ENCODE measurements at regions of chr22 and their contacts with region 1.

Region 1: DNA sequence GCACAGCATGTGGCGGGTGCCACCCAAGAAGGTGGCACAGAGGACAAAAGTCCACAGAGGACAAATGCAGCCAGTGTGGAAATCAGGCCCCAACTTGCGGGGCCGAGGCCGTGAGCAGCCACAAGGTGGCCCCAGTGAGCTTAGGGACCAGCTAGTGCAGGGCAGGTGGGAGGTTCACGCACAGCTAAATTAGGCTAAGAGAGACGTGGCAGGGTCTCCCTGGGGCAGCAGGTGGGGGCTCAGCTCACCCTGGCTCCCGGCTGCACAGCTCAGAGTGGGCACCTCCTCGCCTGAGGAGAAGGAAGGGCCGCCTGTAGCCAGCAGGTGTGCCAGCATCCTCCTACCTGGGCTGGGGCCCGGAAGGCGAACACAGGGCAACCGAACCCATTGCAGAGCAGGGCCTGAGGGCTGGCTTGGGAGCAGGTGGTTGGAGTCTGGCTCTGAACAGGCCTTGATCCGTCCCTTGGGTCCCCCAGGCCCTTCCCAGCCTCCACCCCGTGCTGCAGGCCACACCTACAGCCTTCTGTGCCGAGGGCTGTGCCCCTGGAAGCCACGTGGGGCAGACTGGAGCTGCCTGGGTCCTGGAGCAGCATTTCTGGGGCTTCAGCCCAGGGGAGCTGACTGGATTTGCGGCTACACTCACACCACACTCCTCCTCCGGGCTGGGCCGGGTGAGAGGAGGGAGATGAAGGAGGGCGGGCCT is 26.1 kb upstream of the CELSR1 start:
- DNase-seq: peak; percentile 37
- ATAC-seq: peak; percentile 88
- H3K4me3 ChIP-seq: no peak overlapping the region
- H3K27ac ChIP-seq: no peak overlapping the region
- H3K4me1 ChIP-seq: peaks cover 5% of the 10 kb centered on the region; the same call in 1 of the 2 replicates
- H3K27me3 ChIP-seq: peaks cover 1% of the 10 kb centered on the region; the same call in 1 of the 2 replicates
- CTCF ChIP-seq: peak; percentile 70
- POLR2A ChIP-seq: no peak
- RAD21 ChIP-seq: peak; percentile 72

Region 2: GRCh38 chr22:46219636-46220035 is 343.9 kb before region 1 on chr22:
- CTCF ChIA-PET with region 1: no interaction called
- POLR2A ChIA-PET with region 1: no interaction called
- dilution Hi-C with region 1: no loop called
- in situ Hi-C with region 1: no loop called
- intact Hi-C with region 1: no loop called
- DNase-seq: no peak
- ATAC-seq: no peak
- H3K4me3 ChIP-seq: no peak overlapping the region
- H3K27ac ChIP-seq: no peak overlapping the region
- H3K4me1 ChIP-seq: no peaks in the 10 kb centered on the region
- H3K27me3 ChIP-seq: no peaks in the 10 kb centered on the region
- CTCF ChIP-seq: no peak
- POLR2A ChIP-seq: no peak
- RAD21 ChIP-seq: no peak

Region 3: DNA sequence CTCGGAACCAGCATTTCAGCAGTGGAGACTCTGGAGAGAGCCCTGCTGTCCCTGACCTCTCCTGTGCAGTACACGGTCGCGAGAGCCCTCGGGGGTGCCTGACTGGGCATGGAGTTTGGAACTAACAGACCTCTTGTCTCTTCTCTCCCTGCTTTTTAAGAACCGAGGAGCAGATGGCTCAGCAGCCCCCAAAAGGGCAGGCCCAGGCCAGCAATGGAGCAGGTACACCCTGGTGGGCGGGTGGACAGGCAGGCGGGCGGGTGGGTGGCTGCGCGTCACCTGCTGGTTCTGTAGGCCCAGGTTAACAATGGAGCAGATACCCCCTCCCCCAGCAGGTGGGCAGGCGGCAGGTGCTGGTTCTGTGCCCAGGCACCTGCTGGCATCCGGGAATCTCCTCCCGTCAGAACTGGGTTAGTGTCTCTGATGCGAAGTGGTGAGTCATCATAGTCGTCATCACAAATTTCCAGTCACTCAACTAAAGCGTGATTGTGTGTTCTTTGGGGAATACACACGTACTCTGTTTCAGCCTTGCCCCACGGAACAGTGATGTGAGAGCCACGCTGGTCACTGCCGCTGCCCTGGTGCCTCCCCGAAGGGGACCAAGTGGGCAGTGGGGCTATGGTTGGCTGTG is 97.8 kb after region 1 on chr22:
- CTCF ChIA-PET with region 1: no interaction called
- POLR2A ChIA-PET with region 1: no interaction called
- dilution Hi-C with region 1: no loop called
- in situ Hi-C with region 1: no loop called
- intact Hi-C with region 1: no loop called
- DNase-seq: peak; percentile 76
- ATAC-seq: peak; percentile 52
- H3K4me3 ChIP-seq: no peak overlapping the region
- H3K27ac ChIP-seq: no peak overlapping the region
- H3K4me1 ChIP-seq: peaks cover 2% of the 10 kb centered on the region; the same call in 1 of the 2 replicates
- H3K27me3 ChIP-seq: no peaks in the 10 kb centered on the region
- CTCF ChIP-seq: no peak
- POLR2A ChIP-seq: no peak
- RAD21 ChIP-seq: no peak

Region 4: DNA sequence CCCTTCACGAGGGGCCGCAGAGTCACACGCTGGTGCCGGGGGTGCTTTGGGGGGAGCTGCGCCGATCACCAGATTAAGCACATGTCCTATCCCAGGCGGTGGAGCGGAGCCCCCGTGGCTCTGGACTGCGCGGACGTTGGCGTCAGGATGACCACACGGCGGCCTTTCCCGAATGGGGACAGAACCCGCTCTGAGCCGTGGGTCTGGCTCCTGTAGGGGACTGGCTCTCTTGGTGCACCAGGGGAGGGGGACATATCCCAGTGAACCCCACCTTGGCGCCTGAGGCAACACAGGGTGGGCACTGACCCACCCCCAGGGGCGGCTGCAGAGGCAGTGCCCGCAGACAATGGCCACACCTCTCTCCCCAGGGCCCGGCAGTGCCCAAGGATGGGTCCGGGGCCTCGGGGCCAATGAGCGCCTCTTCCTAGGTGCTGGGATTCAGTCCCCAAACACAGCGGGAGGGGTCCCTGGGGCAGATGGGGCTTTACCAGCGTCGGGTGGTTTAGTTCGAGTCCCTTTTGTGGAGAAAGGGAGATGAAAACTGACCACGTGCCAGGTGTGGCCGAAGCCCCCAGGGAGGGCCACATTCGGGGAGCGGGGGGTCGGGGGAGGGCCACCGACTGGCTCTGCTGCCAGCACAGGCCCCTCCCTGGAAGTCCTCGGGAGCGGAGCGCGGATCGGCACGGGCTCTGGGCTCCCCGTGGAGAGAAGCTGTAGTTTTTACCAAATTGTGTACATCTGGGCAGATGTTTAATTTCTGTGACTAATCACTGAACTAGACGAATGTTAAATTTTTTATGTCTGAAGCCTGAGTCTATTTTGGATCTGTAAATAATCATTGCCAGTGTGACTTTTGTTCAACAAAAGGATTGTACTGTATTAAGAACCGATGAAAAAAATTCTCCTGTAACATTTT is 115.5 kb after region 1 on chr22:
- CTCF ChIA-PET with region 1: interaction called, 3 read pairs
- POLR2A ChIA-PET with region 1: no interaction called
- dilution Hi-C with region 1: no loop called
- in situ Hi-C with region 1: no loop called
- intact Hi-C with region 1: loop called (anchors 5 kb)
- DNase-seq: peak; percentile 71
- ATAC-seq: peak; percentile 74
- H3K4me3 ChIP-seq: no peak overlapping the region
- H3K27ac ChIP-seq: peak overlapping the region; percentile 30; the same call in 1 of the 2 replicates
- H3K4me1 ChIP-seq: peaks cover 14% of the 10 kb centered on the region
- H3K27me3 ChIP-seq: no peaks in the 10 kb centered on the region
- CTCF ChIP-seq: no peak
- POLR2A ChIP-seq: no peak
- RAD21 ChIP-seq: no peak

Region 5: GRCh38 chr22:46737976-46738646 is 174.6 kb after region 1 on chr22 and contains the start of gene CERK:
- CTCF ChIA-PET with region 1: no interaction called
- POLR2A ChIA-PET with region 1: no interaction called
- dilution Hi-C with region 1: no loop called
- in situ Hi-C with region 1: no loop called
- intact Hi-C with region 1: loop called (anchors 2 kb)
- DNase-seq: peak; percentile 62
- ATAC-seq: peak; percentile 89
- H3K4me3 ChIP-seq: peak within 1 kb of the TSS; percentile 94
- H3K27ac ChIP-seq: peak within 1 kb of the TSS; percentile 55
- H3K4me1 ChIP-seq: peaks cover 31% of the 10 kb centered on the region
- H3K27me3 ChIP-seq: no peaks in the 10 kb centered on the region
- CTCF ChIP-seq: no peak
- POLR2A ChIP-seq: peak; percentile 63
- RAD21 ChIP-seq: no peak
- total RNA-seq, gene CERK: 38.7 and 44.4 TPM in 2 replicates